ENCODE measurements at regions of chr19 and their contacts with region 1.

Region 1: GRCh38 chr19:35931161-35931873 is 4.9 kb upstream of the LRFN3 start:
- DNase-seq: peak; percentile 99
- ATAC-seq: peak; percentile 98 to 99
- H3K4me3 ChIP-seq: peak overlapping the region; percentile 39 to 50 (median 46)
- H3K27ac ChIP-seq: peak overlapping the region; percentile 66 to 74 (median 70)
- H3K4me1 ChIP-seq: peaks cover 12 to 20% of the 10 kb centered on the region in 2 donors
- H3K27me3 ChIP-seq: no peaks in the 10 kb centered on the region
- CTCF ChIP-seq: peak; percentile 77 to 94 (median 92)
- POLR2A ChIP-seq: peak; percentile 45 to 69

Region 2: DNA sequence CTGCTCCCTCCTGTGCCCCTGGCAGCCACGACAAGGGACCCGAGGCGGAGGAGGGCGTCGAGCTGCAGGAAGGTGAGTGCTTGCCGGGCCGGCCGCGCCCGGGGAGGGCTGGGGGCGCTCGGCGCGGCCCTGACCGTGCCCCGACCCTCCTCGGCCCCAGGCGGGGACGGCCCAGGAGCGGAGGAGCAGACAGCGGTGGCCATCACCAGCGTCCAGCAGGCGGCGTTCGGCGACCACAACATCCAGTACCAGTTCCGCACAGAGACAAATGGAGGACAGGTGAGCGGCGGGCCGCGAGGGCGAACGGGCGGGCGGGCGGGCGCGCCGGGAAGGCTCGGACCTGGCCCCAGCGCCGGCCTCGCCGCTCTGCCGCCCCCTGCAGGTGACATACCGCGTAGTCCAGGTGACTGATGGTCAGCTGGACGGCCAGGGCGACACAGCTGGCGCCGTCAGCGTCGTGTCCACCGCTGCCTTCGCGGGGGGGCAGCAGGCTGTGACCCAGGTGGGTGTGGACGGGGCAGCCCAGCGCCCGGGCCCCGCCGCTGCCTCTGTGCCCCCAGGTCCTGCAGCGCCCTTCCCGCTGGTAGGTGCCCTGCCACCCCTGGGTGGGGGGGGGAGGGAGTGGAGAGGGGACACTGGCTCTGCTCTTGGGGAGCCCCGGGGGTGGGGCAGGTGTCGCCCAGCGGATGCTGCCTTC is 661.7 kb before region 1 on chr19:
- in situ Hi-C with region 1: no loop called
- intact Hi-C with region 1: loop called (anchors 5 kb)
- DNase-seq: peak; percentile 72 to 86
- ATAC-seq: peak; percentile 46 to 56
- H3K4me3 ChIP-seq: peak overlapping the region; percentile 65 to 98 (median 72)
- H3K27ac ChIP-seq: peak overlapping the region; percentile 95 to 100 (median 98)
- H3K4me1 ChIP-seq: peaks cover 17 to 31% of the 10 kb centered on the region in 2 donors
- H3K27me3 ChIP-seq: no peaks in the 10 kb centered on the region
- CTCF ChIP-seq: peak; percentile 41 to 95 (median 74)
- POLR2A ChIP-seq: peak; percentile 21 to 27

Region 3: GRCh38 chr19:35628565-35629331 is 302.6 kb before region 1 on chr19 and contains the start of gene RBM42:
- in situ Hi-C with region 1: no loop called
- intact Hi-C with region 1: loop called (anchors 10 kb)
- DNase-seq: peak; percentile 97 to 98
- ATAC-seq: peak; percentile 99 to 100
- H3K4me3 ChIP-seq: peak within 1 kb of the TSS; percentile 68 to 100 (median 96)
- H3K27ac ChIP-seq: peak within 1 kb of the TSS; percentile 89 to 95 (median 94)
- H3K4me1 ChIP-seq: peaks cover 8 to 23% of the 10 kb centered on the region in 2 donors
- H3K27me3 ChIP-seq: no peaks in the 10 kb centered on the region
- CTCF ChIP-seq: peak in 2 of 5 experiments; percentile 51 to 67
- POLR2A ChIP-seq: peak; percentile 71
- total RNA-seq, gene RBM42: 45.8 to 77.8 (median 75.4) TPM

Region 4: DNA sequence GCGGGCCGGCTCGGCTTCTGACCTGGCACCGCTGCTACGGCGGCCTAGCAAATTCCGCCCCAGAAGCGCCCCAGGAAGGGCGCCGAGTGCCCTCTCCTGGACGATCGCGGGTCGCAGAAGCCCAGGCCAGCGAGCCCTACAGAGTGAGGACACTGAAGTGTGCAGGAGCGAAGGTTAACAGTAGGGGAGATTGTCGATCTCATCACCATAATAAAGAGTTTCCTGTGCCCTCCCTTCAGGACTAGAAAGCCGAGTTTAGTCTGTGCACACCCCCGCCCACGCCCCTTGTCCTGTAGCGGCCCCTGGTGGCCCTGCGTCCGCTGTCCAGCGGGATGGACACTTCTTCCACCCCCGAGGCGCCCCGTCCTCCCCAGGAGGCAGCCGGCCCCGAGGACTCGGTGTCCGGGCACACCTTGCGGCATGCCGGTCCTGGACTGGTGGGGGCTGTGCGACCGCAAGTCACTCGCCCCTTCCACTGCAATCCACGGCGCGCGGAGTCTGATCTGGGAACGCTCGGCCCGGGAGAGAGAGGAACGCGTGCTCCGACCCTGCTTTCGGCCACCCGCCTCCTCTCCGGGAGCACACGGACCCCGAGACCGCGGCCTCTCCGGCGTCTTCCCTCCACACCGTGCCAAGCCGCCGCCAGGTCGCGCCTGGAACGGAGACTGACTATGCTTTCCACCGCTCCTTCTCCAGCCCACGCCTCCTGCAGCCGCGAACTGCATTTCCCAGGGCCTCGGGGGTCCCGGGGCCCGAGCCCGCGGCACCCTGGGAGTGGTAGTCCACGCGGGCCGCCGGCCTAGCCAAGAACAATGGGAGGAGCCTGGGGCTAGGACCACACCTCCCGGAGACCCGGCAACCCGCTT is 214.3 kb before region 1 on chr19:
- in situ Hi-C with region 1: loop called in 1 of 4 experiments (anchors 10 kb)
- intact Hi-C with region 1: loop called (anchors 1 kb)
- DNase-seq: peak; percentile 75 to 82
- ATAC-seq: peak; percentile 82 to 84
- H3K4me3 ChIP-seq: peak overlapping the region; percentile 92 to 99 (median 96)
- H3K27ac ChIP-seq: peak overlapping the region; percentile 84 to 95 (median 92)
- H3K4me1 ChIP-seq: peaks cover 21 to 25% of the 10 kb centered on the region in 2 donors
- H3K27me3 ChIP-seq: no peaks in the 10 kb centered on the region
- CTCF ChIP-seq: peak; percentile 97 to 99 (median 98)
- POLR2A ChIP-seq: peak; percentile 45 to 48

Region 5: DNA sequence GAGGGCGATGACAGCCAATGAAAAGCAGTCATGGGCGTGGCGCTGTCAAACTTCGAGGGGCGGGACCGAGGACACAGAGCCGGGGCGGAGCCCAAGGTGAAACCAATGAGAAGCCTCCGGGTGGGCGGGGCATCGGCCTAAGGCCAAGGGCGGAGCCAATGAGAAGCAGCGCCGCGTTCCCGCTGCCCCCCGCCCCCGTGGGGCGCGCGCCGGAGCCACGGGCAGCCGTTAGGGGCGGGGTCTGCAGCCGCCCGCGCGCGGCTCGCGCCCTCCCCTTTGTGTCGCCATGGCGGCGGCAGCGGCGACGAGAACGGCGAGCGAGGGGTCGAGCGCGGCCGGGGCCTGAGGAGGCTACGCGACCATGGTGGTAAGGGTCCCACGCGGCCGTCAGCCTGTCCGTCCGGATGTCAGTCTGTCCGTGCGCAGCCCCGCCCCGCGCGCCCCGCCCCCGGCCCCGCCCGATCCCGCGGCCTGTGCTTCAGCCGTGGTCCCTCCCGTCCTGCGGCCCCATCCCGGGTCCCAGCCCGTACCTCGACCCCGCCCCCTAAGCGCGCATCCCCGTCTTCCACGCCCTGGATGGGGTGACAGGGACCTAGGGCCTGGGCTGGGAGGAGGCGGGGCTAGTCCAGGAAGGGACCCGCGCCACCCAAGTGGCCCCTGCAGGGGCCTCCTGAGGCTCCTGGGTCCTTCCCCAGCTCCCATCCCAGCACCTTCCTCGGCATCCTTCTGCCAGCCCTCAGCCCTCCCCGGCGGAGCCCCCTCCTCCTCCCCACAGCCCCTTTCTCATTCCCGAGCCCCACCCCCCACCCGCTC is 155.8 kb before region 1 on chr19 and contains the start of gene ARHGAP33:
- in situ Hi-C with region 1: no loop called
- intact Hi-C with region 1: loop called (anchors 2 kb)
- DNase-seq: peak; percentile 95 to 98
- ATAC-seq: peak; percentile 98
- H3K4me3 ChIP-seq: peak within 1 kb of the TSS; percentile 60 to 81 (median 73)
- H3K27ac ChIP-seq: peak within 1 kb of the TSS; percentile 35 to 69 (median 45)
- H3K4me1 ChIP-seq: peaks cover 4 to 5% of the 10 kb centered on the region in 2 donors
- H3K27me3 ChIP-seq: no peaks in the 10 kb centered on the region
- CTCF ChIP-seq: no peak
- POLR2A ChIP-seq: no peak
- total RNA-seq, gene ARHGAP33: 0.22 to 4.7 (median 2.2) TPM

Region 6: DNA sequence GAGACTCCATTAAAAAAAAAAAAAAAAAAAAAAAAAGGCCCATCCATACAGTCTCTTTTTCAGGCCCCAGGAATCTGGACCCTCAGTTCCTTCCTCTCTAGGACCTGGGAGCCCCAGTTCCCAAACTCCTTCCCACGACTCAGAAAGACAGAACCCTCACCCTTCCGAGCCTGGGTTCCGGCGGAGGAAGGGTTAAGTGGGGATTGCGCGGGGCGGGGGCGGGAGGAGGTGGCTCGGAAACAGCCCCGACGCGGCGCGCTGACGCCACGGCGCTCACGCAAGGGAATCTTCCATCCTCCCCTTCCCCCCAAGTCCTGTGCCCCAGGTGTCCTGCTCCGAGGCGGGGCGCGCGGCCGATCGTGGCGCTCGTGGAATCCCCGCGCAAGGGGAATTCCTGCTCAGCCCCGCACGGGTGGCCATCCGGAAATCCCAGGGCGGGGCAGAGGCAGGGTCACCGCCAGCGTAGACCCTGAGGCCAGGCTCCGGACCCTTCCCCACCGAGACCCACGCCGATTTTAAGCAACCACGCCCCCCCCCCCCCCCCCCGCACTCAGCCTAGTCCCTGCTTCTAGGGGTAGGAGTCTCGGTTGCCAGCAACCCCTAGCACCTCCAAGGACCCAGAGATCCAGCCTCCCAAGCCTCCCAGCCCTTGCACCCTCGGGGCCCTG is 31.6 kb before region 1 on chr19:
- in situ Hi-C with region 1: no loop called
- intact Hi-C with region 1: loop called (anchors 1 kb)
- DNase-seq: peak; percentile 60 to 66
- ATAC-seq: peak; percentile 84 to 86
- H3K4me3 ChIP-seq: peak overlapping the region; percentile 63 to 87 (median 66)
- H3K27ac ChIP-seq: peak overlapping the region; percentile 49 to 79 (median 69)
- H3K4me1 ChIP-seq: peaks cover 9 to 21% of the 10 kb centered on the region in 2 donors
- H3K27me3 ChIP-seq: peaks cover 0 to 3% (median 0%) of the 10 kb centered on the region in 3 donors
- CTCF ChIP-seq: no peak
- POLR2A ChIP-seq: peak in 1 of 2 donors; percentile 38

Region 7: GRCh38 chr19:36054119-36054732 is 122.9 kb after region 1 on chr19 and contains the start of gene THAP8:
- in situ Hi-C with region 1: no loop called
- intact Hi-C with region 1: loop called (anchors 1 kb)
- DNase-seq: peak; percentile 100
- ATAC-seq: peak; percentile 92 to 95
- H3K4me3 ChIP-seq: peak within 1 kb of the TSS; percentile 67 to 93 (median 83)
- H3K27ac ChIP-seq: peak within 1 kb of the TSS; percentile 87 to 99 (median 96)
- H3K4me1 ChIP-seq: peaks cover 12 to 13% of the 10 kb centered on the region in 2 donors
- H3K27me3 ChIP-seq: no peaks in the 10 kb centered on the region
- CTCF ChIP-seq: peak; percentile 50 to 58 (median 54)
- POLR2A ChIP-seq: peak; percentile 65 to 72
- total RNA-seq, gene THAP8: 6.1 to 10.5 (median 6.1) TPM